Right ventricle myocardium inferior (tissue), 1 donor: ENCODE measurements at regions of chr17 and their contacts with region 1.

Region 1: DNA sequence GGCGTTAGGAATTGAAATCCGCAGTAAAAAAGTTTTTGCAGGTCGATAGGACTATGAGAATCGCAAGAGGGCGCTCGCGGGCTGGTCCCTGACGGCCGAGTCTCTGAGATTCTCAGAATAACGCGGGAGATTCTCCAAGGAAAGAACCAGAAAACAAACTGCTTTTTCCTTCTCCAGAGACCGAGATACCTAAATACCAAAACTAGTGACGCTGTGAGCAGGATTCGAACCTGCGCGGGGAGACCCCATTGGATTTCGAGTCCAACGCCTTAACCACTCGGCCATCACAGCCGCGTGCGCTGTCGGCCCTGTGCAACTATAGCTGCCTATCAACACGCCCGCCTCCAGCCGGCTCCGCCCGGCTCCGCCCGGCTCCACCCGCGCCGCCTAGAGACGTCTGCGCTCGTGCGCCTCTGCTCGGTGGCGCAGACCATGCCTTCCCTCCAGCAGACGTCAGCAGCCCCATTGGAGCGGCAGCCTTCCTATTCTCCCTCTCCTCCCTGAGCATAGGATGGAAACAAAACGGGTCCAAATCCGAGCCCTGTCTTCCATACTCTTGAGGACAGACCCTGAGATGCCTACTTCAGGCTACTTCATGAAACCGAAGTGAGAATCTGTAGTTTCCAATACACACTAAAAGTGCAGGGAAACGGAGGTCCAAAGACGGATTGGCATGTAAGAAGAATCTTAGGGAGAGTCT is 13.4 kb downstream of the PER1 start:
- DNase-seq: peak; percentile 96
- ATAC-seq: peak; percentile 92

Region 2: DNA sequence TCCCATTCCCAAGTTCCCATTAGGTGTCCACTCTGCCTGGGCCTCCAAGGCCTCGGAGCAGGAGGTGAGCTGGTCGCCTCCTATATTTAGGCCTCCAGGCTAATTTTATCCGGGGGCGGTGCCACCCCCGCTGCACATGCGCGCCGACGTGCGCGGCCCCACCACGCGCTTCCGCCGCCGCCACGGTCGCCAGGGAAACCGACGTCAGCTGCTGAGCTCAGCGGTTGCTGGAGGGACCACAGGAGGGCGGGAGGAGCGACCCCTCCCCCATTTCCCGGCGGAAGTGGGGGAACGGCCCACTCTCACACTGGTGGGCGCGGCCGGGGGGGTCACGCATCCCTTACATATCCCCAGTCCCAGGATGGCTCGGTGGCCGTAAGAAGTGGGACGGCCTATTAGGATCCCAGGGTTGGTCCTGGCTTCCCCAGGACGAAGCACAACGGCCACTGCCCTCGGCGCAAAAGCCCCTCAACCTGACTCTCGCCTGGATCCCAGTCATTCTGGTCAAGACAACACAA is 12.4 kb after region 1 on chr17:
- intact Hi-C with region 1: loop called (anchors 1 kb)
- DNase-seq: peak; percentile 95
- ATAC-seq: peak; percentile 40

Region 3: GRCh38 chr17:8156246-8156992 is 17.6 kb after region 1 on chr17:
- intact Hi-C with region 1: loop called (anchors 1 kb)
- DNase-seq: peak; percentile 100
- ATAC-seq: peak; percentile 66